Cardiac septum (tissue), 1 donor: ENCODE measurements at regions of chr4 and their contacts with region 1.

Region 1: DNA sequence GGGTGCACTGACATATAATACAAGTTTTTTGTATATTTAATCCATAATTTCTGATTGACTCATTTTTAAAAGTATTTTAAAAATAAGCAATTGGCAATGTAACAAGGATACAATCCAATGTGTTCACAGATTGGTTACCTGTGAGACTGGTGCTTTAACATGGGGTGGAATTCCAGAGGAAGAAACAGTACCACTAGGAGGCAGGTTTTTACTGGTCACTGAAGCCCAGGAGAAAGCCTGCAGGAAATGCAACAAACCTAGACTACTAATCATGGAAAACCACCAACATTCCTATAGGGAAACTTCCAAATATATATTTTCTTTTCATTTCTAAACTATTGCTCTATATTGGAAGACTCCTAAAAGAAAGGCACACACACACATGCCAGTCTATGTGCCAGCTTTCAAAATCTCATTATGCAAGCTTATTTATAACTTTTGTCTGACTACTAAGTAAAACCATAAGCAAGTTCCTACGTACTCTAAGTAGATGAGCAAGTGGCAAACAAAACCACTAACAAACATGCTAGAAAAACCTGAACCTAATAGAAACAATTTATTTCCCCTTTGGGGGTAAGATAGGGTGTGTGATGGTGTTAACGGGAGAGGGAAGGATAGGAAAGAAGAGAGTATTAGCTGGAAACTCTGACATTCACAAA is 19.2 kb downstream of the G3BP2 start:
- DNase-seq: no peak

Region 2: DNA sequence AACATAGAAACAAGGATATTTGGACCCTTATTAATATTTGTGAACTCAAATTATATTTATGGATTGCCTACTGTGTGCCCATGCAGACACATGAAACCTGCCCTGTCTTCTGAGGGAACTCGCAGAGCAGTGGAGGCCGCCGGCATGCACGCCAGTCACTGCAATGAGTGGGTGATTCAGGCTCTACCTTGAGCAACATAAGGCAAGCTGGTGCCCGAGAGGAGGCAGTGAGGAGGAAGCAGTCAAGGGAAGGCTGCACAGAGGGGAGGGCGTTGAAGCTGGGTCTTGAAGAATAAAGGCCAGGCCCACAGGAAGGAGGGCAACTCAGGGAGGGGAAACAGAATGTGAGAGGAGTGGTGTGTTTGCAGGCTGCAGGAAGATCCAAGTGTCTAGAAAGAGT is 195.5 kb after region 1 on chr4:
- intact Hi-C with region 1: loop called (anchors 5 kb)
- DNase-seq: no peak

Region 3: DNA sequence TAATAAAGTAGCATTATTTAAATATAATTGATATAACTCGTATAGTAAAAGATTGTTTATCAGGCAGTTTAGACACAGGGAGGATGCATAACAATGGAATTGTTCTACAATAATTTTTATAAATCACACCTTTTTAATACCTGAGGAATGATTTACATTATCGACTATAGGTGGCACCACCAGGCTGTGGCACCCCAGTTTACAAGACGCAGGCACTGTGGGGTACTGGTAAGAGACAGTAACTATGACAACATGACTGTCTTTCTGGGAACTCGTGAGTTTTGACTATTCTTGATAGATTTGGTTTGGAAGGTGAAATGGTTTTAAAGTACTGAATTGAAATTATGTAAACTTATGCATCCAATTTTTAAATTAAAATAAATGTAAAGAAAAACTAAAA is 625.5 kb after region 1 on chr4:
- intact Hi-C with region 1: no loop called
- DNase-seq: no peak